Activated CD4-positive, alpha-beta T cell treated with anti-CD3 and anti-CD28 coated beads, Interleukin-2, amount 10 ng/mL, durations not matched to agents 24 days and 14 days (primary cell): ENCODE measurements at regions of chr20 and their contacts with region 1.

Region 1: GRCh38 chr20:52972190-52972937 is at the start of gene TSHZ2:
- DNase-seq: peak; percentile 87
- H3K4me3 Mint-ChIP-seq: peak within 1 kb of the TSS; percentile 98
- H3K27ac Mint-ChIP-seq: peak within 1 kb of the TSS; percentile 98
- H3K4me1 Mint-ChIP-seq: peaks cover 29% of the 10 kb centered on the region
- H3K27me3 Mint-ChIP-seq: peaks cover 10% of the 10 kb centered on the region
- total RNA-seq, gene TSHZ2: 28.0 and 29.5 TPM in 2 replicates

Region 2: DNA sequence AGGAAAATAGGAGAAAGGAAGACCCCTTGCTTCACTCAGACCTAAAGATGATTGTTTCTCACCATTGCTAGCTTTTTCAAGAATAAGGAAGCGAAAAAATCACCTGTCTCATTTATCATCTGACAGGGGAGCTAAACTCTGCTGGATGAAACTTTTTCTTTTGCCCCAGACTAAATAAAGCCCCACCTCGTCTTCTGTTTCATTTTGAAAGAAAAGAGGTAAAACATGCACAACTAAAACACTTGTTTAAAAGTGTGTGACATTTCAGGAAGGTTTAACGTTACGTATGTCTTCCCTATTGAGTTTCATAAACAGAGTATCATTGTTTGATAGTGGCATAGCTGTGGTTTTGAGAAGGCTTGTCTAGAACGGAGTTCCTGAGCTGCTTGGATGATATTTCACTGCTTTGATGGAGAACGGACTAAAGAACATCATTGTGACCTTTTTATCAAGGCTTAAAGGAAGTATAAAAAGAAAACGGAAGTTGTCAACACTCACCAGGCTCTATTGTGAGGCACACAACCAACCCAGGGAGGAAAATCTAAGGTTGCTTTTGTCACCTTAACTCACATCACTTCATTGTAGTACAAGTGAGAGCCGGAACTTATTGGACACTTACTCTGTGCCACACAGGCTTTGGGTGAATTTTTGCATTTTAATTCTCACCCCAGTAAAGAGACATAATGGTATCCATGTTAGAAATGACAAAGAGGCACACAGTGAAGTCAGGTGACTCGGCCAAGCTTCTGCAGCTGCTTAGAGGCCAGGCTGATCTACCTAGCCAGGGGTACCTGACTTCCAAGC is 29.3 kb after region 1 on chr20:
- intact Hi-C with region 1: loop called (anchors 1 kb)
- DNase-seq: peak; percentile 72
- H3K4me3 Mint-ChIP-seq: peak overlapping the region; percentile 80
- H3K27ac Mint-ChIP-seq: peak overlapping the region; percentile 98
- H3K4me1 Mint-ChIP-seq: peaks cover 38% of the 10 kb centered on the region
- H3K27me3 Mint-ChIP-seq: no peaks in the 10 kb centered on the region

Region 3: GRCh38 chr20:53070706-53071392 is 98.5 kb after region 1 on chr20:
- intact Hi-C with region 1: loop called (anchors 1 kb)
- DNase-seq: peak; percentile 74
- H3K4me3 Mint-ChIP-seq: peak overlapping the region; percentile 21
- H3K27ac Mint-ChIP-seq: peak overlapping the region; percentile 82
- H3K4me1 Mint-ChIP-seq: peaks cover 44% of the 10 kb centered on the region
- H3K27me3 Mint-ChIP-seq: no peaks in the 10 kb centered on the region

Region 4: GRCh38 chr20:53216856-53217576 is 244.7 kb after region 1 on chr20:
- intact Hi-C with region 1: loop called (anchors 1 kb)
- DNase-seq: peak; percentile 94
- H3K4me3 Mint-ChIP-seq: peak overlapping the region; percentile 70
- H3K27ac Mint-ChIP-seq: peak overlapping the region; percentile 72
- H3K4me1 Mint-ChIP-seq: peaks cover 31% of the 10 kb centered on the region
- H3K27me3 Mint-ChIP-seq: no peaks in the 10 kb centered on the region